Endothelial cell of umbilical vein (primary cell): ENCODE measurements at regions of chr9 and their contacts with region 1.

Region 1: GRCh38 chr9:85224729-85225128 is 517.0 kb downstream of the AGTPBP1 start:
- DNase-seq: peak; percentile 70
- H3K4me3 ChIP-seq: no peak overlapping the region
- H3K27ac ChIP-seq: no peak overlapping the region
- H3K4me1 ChIP-seq: peaks cover 17% of the 10 kb centered on the region
- H3K27me3 ChIP-seq: no peaks in the 10 kb centered on the region
- CTCF ChIP-seq: no peak
- POLR2A ChIP-seq: no peak

Region 2: GRCh38 chr9:85200726-85201404 is 23.9 kb before region 1 on chr9:
- CTCF ChIA-PET with region 1: interaction called, 5 read pairs
- POLR2A ChIA-PET with region 1: no interaction called
- dilution Hi-C with region 1: no loop called
- intact Hi-C with region 1: loop called (anchors 2 kb)
- DNase-seq: peak; percentile 94
- H3K4me3 ChIP-seq: no peak overlapping the region
- H3K27ac ChIP-seq: peak overlapping the region; percentile 32
- H3K4me1 ChIP-seq: peaks cover 7% of the 10 kb centered on the region
- H3K27me3 ChIP-seq: peaks cover 0 to 3% of the 10 kb centered on the region in 2 experiments
- CTCF ChIP-seq: no peak
- POLR2A ChIP-seq: no peak